H1 (cell line): ENCODE measurements at regions of chr12 and their contacts with region 1.

Region 1: DNA sequence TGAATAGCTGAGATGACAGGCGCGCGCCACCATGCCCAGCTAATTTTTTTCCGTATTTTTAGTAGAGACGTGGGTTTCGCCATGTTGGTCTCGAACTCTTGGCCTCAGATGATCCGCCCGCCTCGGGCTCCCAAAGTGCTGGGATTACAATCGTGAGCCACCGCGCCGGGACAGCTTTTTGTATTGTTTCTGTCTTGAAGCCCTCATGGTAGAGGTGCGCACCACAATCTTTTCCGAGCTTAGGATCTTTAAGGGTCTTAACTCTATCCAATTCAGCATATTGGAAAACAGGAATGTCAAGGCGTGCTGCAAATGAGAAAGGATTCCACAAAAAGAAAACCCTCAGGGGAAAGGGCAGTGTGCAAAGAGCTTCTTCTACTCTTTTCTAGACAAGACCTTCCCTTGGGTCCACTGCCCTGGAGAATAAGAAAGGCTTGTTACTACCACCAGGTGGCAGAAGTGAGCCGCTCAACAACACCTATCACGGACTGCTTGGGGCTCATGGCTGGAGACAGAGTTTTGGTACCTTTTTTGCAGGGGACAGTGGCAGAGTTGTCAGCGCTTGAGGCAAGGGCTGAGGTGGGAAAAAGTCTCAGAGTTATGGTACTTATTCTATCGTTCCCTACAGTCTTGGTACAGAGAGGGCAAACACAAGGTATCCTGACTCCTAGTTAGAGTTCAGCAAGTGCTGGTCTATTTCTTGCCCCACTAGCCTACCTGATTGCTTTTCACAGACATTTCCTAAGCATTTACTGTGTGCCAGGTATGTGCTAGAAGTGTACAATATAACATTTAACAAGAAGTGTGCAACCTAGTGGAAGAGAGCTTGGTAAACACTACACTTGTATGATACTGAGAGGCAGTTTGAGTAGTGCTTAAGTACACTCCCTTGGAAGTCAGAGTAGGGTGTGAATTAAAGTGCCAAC is 16.4 kb upstream of the SP7 start:
- DNase-seq: peak in 1 of 2 experiments; percentile 85
- H3K4me3 ChIP-seq: no peak overlapping the region
- H3K27ac ChIP-seq: no peak overlapping the region
- H3K4me1 ChIP-seq: no peaks in the 10 kb centered on the region
- H3K27me3 ChIP-seq: no peaks in the 10 kb centered on the region
- CTCF ChIP-seq: peak; percentile 66 to 94 (median 90)
- EP300 ChIP-seq: no peak
- POLR2A ChIP-seq: no peak
- RAD21 ChIP-seq: peak; percentile 91 to 98

Region 2: DNA sequence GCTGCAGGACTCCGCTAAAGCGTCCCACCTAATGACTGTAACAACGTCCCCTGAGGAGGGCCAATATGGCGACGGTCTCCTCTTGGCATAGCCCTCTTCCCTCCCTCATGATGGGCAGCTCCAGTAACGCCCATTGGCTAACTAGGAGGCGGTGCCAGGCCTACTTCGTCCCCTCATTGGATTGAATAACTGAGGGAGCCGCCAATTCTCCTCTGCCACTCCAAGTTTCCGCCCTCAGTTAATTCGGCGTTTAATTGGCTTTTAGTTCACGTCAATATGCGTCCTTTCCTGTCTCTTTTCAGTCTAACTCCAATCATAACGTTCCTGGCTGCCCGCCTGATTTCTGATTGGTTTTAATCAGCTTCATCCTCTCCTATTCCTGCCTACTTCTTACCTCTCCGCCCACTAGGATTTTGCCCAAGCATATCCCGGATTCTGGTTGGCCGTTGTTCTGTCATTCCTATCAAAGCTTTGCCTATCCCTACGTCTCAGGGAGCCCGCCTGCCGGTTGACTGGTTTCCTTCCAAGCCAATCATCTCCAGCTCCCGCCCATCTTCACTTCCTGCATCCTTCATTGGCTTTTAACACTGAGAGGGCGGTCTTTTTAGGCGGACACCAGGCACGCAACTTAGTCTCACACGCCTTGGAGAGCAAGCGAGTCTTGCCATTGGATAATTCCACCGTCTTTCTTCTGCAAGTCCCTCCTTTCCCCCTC is 27.0 kb after region 1 on chr12:
- CTCF ChIA-PET with region 1: interaction called, 69 read pairs
- POLR2A ChIA-PET with region 1: interaction called, 15 read pairs
- DNase-seq: peak; percentile 86 to 100
- H3K4me3 ChIP-seq: peak overlapping the region; percentile 50 to 72 (median 56)
- H3K27ac ChIP-seq: peak overlapping the region; percentile 96
- H3K4me1 ChIP-seq: peaks cover 6 to 26% (median 14%) of the 10 kb centered on the region in 4 experiments
- H3K27me3 ChIP-seq: no peaks in the 10 kb centered on the region
- CTCF ChIP-seq: no peak
- EP300 ChIP-seq: no peak
- POLR2A ChIP-seq: peak; percentile 93 to 98
- RAD21 ChIP-seq: no peak

Region 3: DNA sequence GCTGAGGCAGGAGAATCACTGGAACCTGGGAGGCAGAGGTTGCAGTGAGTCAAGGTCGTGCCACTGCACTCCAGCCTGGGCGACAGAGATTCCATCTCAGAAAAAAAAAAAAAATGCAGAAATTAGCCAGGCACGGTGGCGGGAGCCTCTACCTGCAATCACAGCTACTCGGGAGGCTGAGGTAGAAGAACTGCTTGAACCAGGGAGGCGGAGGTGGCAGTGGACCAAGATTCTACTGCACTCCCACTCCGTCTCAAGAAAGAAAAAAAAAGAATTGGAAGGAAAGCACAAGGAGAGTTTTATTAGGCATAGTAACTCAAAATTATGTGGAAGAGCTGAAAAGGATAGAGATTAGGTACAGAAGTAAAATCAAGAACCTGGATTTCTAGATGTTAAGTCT is 50.3 kb after region 1 on chr12:
- CTCF ChIA-PET with region 1: interaction called, 19 read pairs
- POLR2A ChIA-PET with region 1: no interaction called
- DNase-seq: no peak
- H3K4me3 ChIP-seq: no peak overlapping the region
- H3K27ac ChIP-seq: no peak overlapping the region
- H3K4me1 ChIP-seq: no peaks in the 10 kb centered on the region
- H3K27me3 ChIP-seq: no peaks in the 10 kb centered on the region
- CTCF ChIP-seq: no peak
- EP300 ChIP-seq: no peak
- POLR2A ChIP-seq: no peak
- RAD21 ChIP-seq: no peak

Region 4: GRCh38 chr12:53427905-53428594 is 75.5 kb after region 1 on chr12:
- CTCF ChIA-PET with region 1: interaction called, 54 read pairs
- POLR2A ChIA-PET with region 1: interaction called, 3 read pairs
- DNase-seq: no peak
- H3K4me3 ChIP-seq: no peak overlapping the region
- H3K27ac ChIP-seq: no peak overlapping the region
- H3K4me1 ChIP-seq: no peaks in the 10 kb centered on the region
- H3K27me3 ChIP-seq: no peaks in the 10 kb centered on the region
- CTCF ChIP-seq: no peak
- EP300 ChIP-seq: no peak
- POLR2A ChIP-seq: no peak
- RAD21 ChIP-seq: no peak

Region 5: GRCh38 chr12:53508534-53509199 is 156.1 kb after region 1 on chr12:
- CTCF ChIA-PET with region 1: interaction called, 30 read pairs
- POLR2A ChIA-PET with region 1: no interaction called
- DNase-seq: peak; percentile 77 to 97
- H3K4me3 ChIP-seq: no peak overlapping the region
- H3K27ac ChIP-seq: no peak overlapping the region
- H3K4me1 ChIP-seq: no peaks in the 10 kb centered on the region
- H3K27me3 ChIP-seq: no peaks in the 10 kb centered on the region
- CTCF ChIP-seq: peak; percentile 94 to 99 (median 98)
- EP300 ChIP-seq: no peak
- POLR2A ChIP-seq: no peak
- RAD21 ChIP-seq: peak; percentile 99